ENCODE measurements at regions of chr1 and their contacts with region 1.

Region 1: GRCh38 chr1:56411484-56412180 is 167.7 kb downstream of the PLPP3 start:
- DNase-seq: no peak
- ATAC-seq: no peak

Region 2: GRCh38 chr1:56189946-56190792 is 221.5 kb before region 1 on chr1:
- intact Hi-C with region 1: loop called (anchors 5 kb)
- DNase-seq: no peak
- ATAC-seq: no peak

Region 3: GRCh38 chr1:56266359-56266758 is 145.3 kb before region 1 on chr1:
- intact Hi-C with region 1: no loop called
- DNase-seq: no peak
- ATAC-seq: no peak

Region 4: DNA sequence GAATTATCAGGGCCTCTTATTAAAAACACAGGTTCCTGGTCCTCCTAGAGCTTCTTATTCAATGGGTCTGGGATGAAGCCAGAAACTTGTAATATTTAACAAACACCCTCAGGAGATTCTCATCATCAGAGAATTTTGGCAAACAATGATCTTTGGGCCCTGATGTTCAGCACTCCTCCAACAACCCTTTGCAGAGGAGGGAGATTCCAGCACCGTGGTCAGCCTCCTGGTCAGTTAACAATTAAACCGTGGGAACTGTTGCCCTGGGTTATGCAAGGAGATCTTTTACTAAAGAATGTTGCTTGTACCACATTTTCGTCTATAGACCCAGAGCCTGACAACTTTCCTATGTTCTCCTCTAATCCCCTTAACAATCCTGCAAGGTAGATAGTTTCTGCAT is 126.7 kb before region 1 on chr1:
- intact Hi-C with region 1: loop called (anchors 5 kb)
- DNase-seq: peak; percentile 14
- ATAC-seq: peak; percentile 81

Region 5: GRCh38 chr1:56502700-56503245 is 91.1 kb after region 1 on chr1:
- intact Hi-C with region 1: loop called (anchors 5 kb)
- DNase-seq: no peak
- ATAC-seq: no peak

Measured in Right ventricle myocardium inferior (tissue), 1 donor.